ENCODE measurements at regions of chr20 and their contacts with region 1.

Region 1: DNA sequence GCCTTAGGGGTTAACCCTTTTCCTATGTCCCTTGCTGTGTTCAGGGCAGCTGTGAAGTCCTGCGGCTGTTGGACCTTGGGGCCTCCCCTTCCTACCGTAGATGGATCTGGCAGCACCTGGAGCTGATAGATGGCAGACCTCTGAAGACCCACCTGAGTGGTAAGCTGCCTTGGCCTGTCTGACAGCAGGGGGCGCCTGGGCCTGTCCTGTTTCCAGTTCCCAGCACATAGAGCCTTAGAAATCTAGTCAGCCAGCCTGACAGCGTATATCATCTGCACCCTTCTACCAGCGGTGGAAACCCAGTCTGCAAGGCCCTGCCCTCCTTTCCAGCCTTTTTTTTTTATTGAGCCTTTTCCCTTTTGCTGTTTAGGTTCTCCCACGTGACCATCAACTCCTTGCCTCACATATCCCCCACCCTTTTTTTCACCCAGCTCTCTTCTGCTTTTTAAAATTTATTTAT is 26.6 kb downstream of the CNBD2 start:
- DNase-seq: peak; percentile 78 to 89
- ATAC-seq: peak; percentile 90 to 94 (median 92)
- H3K4me3 ChIP-seq: no peak overlapping the region
- H3K27ac ChIP-seq: no peak overlapping the region
- H3K4me1 ChIP-seq: peaks cover 3% of the 10 kb centered on the region
- H3K27me3 ChIP-seq: no peaks in the 10 kb centered on the region
- CTCF ChIP-seq: peak; percentile 88

Region 2: DNA sequence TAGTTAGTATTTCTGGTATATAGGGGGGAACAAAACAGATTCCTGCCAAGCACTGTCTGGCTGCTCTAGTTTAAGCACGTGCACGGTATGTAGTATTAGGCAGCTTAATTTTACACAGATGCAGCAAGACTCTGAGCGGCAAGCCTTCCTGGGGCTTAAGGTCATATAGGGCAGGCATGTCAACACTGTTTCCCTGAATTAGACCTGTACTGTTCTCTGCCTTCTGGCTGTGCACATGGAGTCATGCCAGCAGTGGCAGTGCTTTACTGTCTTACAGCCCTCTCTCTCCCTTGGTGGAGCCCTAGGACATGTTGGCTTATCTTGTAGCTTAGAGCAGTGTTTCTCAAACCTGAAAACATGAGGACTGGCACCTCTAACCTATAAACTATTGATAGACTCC is 166.6 kb before region 1 on chr20:
- intact Hi-C with region 1: no loop called
- DNase-seq: peak; percentile 70 to 91
- ATAC-seq: peak; percentile 92 to 96 (median 95)
- H3K4me3 ChIP-seq: no peak overlapping the region
- H3K27ac ChIP-seq: peak overlapping the region; percentile 72
- H3K4me1 ChIP-seq: peaks cover 34% of the 10 kb centered on the region
- H3K27me3 ChIP-seq: no peaks in the 10 kb centered on the region
- CTCF ChIP-seq: no peak

Region 3: GRCh38 chr20:36132802-36133211 is 137.8 kb after region 1 on chr20:
- intact Hi-C with region 1: loop called (anchors 1 to 2 kb)
- DNase-seq: no peak
- ATAC-seq: no peak
- H3K4me3 ChIP-seq: no peak overlapping the region
- H3K27ac ChIP-seq: no peak overlapping the region
- H3K4me1 ChIP-seq: no peaks in the 10 kb centered on the region
- H3K27me3 ChIP-seq: no peaks in the 10 kb centered on the region
- CTCF ChIP-seq: no peak

Region 4: DNA sequence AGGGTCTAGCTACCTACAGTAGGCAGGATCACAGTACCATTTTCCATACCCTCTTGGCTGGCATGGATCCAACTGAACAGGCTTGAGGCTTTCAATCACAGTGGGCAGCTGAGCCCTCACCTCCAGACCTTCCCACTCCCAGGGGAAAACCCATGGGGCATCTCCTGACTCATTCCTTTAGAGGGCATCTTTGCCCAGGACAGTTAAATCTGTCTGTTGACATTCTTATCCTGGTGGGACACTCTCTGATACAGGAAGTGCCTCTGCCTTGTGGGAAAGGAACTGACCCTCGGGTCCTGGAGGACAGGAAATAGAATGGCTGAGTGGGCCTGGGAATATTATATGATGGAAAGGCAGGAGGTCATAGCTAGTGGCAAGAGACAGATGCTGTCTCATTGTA is 149.3 kb after region 1 on chr20:
- intact Hi-C with region 1: loop called in 1 of 2 experiments (anchors 2 kb)
- DNase-seq: no peak
- ATAC-seq: no peak
- H3K4me3 ChIP-seq: no peak overlapping the region
- H3K27ac ChIP-seq: peak overlapping the region; percentile 0
- H3K4me1 ChIP-seq: peaks cover 39% of the 10 kb centered on the region
- H3K27me3 ChIP-seq: no peaks in the 10 kb centered on the region
- CTCF ChIP-seq: no peak

Region 5: DNA sequence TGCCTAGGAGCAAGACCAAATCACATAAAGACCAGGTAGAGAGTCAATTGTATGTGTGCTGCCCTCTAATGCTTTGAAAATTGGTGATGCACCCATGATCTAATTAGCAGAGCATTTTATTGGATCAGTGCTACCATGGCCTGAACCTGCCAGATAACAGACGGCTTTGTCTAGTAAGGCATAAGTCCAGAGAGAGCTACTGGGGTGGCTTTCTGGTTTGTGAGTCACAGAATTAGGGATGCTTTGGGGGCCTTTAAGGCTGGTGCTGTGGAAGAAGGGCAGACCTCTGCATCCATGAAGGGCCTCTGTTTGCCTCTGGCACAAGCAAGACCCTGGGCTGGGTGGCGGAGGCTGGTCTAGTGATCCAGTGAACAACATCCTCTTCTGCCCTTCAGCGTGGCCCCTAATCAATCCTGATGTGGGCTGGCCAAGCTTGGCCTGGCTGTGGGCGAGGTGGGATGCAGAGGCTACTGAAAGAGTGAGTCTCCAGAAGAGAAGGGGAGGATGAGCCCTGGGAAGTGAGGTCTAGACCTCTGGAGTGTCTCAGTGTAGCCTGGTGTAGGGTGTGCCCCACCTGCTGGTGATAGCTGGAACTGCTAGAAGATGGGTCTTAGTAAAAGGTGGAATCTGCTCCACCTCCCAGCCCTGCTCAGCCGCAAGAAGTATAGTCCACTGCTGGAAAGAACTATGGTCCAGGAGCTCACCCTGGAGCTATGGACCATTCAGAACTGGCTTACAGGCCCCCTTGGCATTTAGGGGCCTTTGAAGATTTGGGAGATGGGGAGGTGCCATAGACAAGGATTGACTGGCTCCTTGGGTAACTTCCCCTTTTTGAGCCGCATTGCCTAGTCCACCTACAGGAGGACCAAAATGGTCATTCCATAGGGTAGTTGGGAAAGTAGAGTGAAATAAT is 204.6 kb after region 1 on chr20:
- intact Hi-C with region 1: loop called in 1 of 2 experiments (anchors 2 kb)
- DNase-seq: peak; percentile 75 to 81
- ATAC-seq: peak; percentile 84 to 92 (median 86)
- H3K4me3 ChIP-seq: no peak overlapping the region
- H3K27ac ChIP-seq: no peak overlapping the region
- H3K4me1 ChIP-seq: no peaks in the 10 kb centered on the region
- H3K27me3 ChIP-seq: no peaks in the 10 kb centered on the region
- CTCF ChIP-seq: peak; percentile 94